Activated T-helper 2 cell treated with anti-CD3 and anti-CD28 coated beads, Interferon-gamma antibody, Interleukin-2, Interleukin-4, amounts not matched to agents 10 μg/mL and 5 μg/mL and 100 μg/mL, durations not matched to agents 14 hours and 24 hours and 36 hours (primary cell): ENCODE measurements at regions of chr11 and their contacts with region 1.

Region 1: GRCh38 chr11:125887373-125888324 is at the start of gene HYLS1:
- DNase-seq: peak; percentile 99
- H3K4me3 Mint-ChIP-seq: peak within 1 kb of the TSS; percentile 86
- H3K27ac Mint-ChIP-seq: peak within 1 kb of the TSS; percentile 98
- H3K4me1 Mint-ChIP-seq: peaks cover 42% of the 10 kb centered on the region
- H3K27me3 Mint-ChIP-seq: no peaks in the 10 kb centered on the region
- total RNA-seq, gene HYLS1: 12.0 and 12.5 TPM in 2 replicates

Region 2: DNA sequence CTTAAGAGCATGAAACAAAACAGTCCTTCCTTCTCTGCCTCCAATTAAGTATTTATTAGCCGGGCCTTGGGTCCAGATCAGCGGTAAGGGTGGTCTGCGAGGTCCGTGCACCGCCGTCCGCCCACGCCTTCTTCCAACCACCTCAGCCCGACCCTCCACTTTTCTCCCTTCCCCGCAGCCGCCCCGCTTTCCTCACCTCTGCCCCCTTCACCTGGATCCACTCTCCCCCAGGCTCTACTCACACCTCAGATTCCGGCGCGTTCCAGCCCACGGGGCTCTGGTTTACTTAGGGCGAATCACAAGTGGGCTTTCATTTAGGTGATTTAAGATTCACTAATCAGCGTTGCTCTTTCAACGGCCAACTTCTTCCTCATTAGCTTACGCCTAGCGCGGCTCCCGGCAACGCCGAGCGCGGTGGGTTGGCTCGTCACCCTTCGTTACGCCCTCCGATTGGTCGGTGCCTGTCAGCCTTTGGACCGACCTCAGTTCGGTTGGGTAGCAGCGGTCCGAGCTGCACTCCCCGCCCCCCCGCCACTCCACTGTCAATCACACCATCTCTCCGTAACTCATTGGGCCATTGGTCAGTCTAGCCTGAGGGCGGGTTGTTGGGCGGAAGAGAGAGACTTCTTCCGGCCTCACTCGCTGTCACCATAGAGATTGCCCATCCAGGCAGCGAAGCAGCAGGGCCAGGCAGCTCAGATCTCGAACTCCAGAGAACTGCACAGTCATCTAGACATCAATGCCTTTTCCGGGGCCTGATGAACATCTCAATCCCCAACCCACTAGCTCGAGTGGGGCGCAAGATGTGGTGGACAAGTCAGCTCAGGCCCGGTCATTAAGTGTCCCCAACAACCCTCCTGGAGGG is 776.1 kb before region 1 on chr11 and contains the start of gene TMEM218:
- intact Hi-C with region 1: loop called (anchors 5 kb)
- DNase-seq: peak; percentile 97
- H3K4me3 Mint-ChIP-seq: peak within 1 kb of the TSS; percentile 100
- H3K27ac Mint-ChIP-seq: peak within 1 kb of the TSS; percentile 100
- H3K4me1 Mint-ChIP-seq: peaks cover 22% of the 10 kb centered on the region
- H3K27me3 Mint-ChIP-seq: peaks cover 6% of the 10 kb centered on the region
- total RNA-seq, gene TMEM218: 17.9 and 18.1 TPM in 2 replicates

Region 3: GRCh38 chr11:125592305-125593112 is 295.1 kb before region 1 on chr11 and contains the start of gene STT3A:
- intact Hi-C with region 1: loop called (anchors 1 kb)
- DNase-seq: peak; percentile 97
- H3K4me3 Mint-ChIP-seq: peak within 1 kb of the TSS; percentile 99
- H3K27ac Mint-ChIP-seq: peak within 1 kb of the TSS; percentile 92
- H3K4me1 Mint-ChIP-seq: peaks cover 38% of the 10 kb centered on the region
- H3K27me3 Mint-ChIP-seq: no peaks in the 10 kb centered on the region
- total RNA-seq, gene STT3A: 187 and 198 TPM in 2 replicates

Region 4: GRCh38 chr11:125842321-125842948 is 45.2 kb before region 1 on chr11:
- intact Hi-C with region 1: no loop called
- DNase-seq: no peak
- H3K4me3 Mint-ChIP-seq: no peak overlapping the region
- H3K27ac Mint-ChIP-seq: no peak overlapping the region
- H3K4me1 Mint-ChIP-seq: no peaks in the 10 kb centered on the region
- H3K27me3 Mint-ChIP-seq: peaks cover 1% of the 10 kb centered on the region

Region 5: DNA sequence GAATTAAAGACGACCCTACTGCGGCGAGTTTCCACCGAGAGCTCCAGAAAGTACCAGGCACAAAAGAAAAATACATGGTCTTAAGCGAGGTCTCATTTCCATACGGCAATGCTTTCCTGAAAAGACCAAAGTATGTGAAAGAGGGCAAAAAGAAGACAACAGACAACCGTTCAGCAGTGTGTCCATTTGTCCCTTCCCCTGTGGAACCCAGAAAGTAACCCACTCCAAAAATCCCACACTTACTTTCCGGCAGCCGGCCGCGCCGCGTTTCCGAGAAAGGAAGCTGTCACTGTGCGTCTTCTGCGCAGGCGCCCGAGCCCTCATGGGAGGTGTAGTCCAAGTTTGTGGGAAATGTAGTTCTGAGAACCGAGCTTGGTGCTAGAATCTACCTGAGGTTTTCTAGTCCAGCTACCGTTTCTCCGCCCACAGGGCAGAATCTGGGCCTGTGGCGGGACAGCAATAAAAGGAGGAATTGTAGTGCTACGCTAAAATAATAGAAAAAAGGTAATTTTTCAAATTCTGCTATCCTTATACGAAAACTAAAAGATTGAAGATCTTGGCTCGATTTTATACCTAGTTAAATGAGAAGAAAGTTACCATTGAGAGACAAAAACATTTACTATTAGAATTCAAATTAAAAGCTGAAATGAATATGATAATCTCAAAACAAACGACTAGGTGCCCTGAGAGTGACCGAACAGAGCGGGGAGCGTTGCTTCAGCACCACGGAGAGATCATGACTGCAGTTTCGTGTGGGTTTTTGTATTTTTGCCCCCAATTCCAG is 15.5 kb after region 1 on chr11 and contains the start of gene PUS3:
- intact Hi-C with region 1: loop called (anchors 1 kb)
- DNase-seq: peak; percentile 84
- H3K4me3 Mint-ChIP-seq: peak within 1 kb of the TSS; percentile 94
- H3K27ac Mint-ChIP-seq: peak within 1 kb of the TSS; percentile 92
- H3K4me1 Mint-ChIP-seq: peaks cover 29% of the 10 kb centered on the region
- H3K27me3 Mint-ChIP-seq: peaks cover 31% of the 10 kb centered on the region
- total RNA-seq, gene PUS3: 16.0 and 17.0 TPM in 2 replicates

Region 6: DNA sequence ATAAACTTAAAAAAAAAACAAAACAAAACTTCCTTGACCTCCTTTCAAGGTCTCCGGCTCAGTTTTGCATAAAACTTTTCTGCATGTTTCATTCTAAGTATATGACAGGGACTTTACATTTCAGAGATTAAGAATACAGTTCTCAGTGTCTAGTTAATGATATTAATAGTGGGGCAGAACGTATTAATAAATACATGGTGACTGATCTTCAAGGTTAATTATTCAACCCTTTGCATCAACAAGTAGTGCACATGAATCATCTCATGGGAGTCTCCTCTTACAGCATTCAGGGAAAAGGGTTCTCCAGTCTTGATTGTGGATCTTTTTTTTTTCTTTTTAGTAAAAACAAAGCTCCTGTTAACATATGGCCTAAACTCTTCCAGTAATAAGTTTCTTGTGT is 966.1 kb after region 1 on chr11:
- intact Hi-C with region 1: no loop called
- DNase-seq: no peak
- H3K4me3 Mint-ChIP-seq: no peak overlapping the region
- H3K27ac Mint-ChIP-seq: no peak overlapping the region
- H3K4me1 Mint-ChIP-seq: no peaks in the 10 kb centered on the region
- H3K27me3 Mint-ChIP-seq: no peaks in the 10 kb centered on the region